Transverse colon (tissue), 4 donors: ENCODE measurements at regions of chr19 and their contacts with region 1.

Region 1: GRCh38 chr19:48746738-48747575 is at the start of gene IZUMO1:
- DNase-seq: peak; percentile 57
- H3K4me3 ChIP-seq: peak within 1 kb of the TSS in 2 of 4 donors; percentile 15 to 41
- H3K27ac ChIP-seq: peak within 1 kb of the TSS in 3 of 4 donors; percentile 42 to 70 (median 59)
- H3K4me1 ChIP-seq: peaks cover 0 to 7% (median under 1%) of the 10 kb centered on the region in 4 donors
- H3K27me3 ChIP-seq: peaks cover 47% of the 10 kb centered on the region
- CTCF ChIP-seq: no peak
- EP300 ChIP-seq: no peak
- POLR2A ChIP-seq: no peak
- total RNA-seq, gene IZUMO1: not detected

Region 2: GRCh38 chr19:48391107-48391986 is 355.6 kb before region 1 on chr19 and contains the start of gene KDELR1:
- in situ Hi-C with region 1: no loop called
- intact Hi-C with region 1: no loop called
- DNase-seq: peak; percentile 82
- H3K4me3 ChIP-seq: peak within 1 kb of the TSS; percentile 63 to 87 (median 78)
- H3K27ac ChIP-seq: peak within 1 kb of the TSS; percentile 88 to 94 (median 92)
- H3K4me1 ChIP-seq: peaks cover 0 to 36% (median 27%) of the 10 kb centered on the region in 4 donors
- H3K27me3 ChIP-seq: peaks cover 41% of the 10 kb centered on the region
- CTCF ChIP-seq: peak; percentile 84 to 94 (median 88)
- EP300 ChIP-seq: no peak
- POLR2A ChIP-seq: peak; percentile 65
- total RNA-seq, gene KDELR1: 80.6 to 146 (median 120) TPM

Region 3: GRCh38 chr19:48646001-48646721 is 100.8 kb before region 1 on chr19 and contains the start of gene CA11:
- in situ Hi-C with region 1: loop called in 1 of 4 experiments (anchors 10 kb)
- intact Hi-C with region 1: no loop called
- DNase-seq: peak; percentile 92
- H3K4me3 ChIP-seq: peak within 1 kb of the TSS; percentile 34 to 54 (median 45)
- H3K27ac ChIP-seq: peak within 1 kb of the TSS; percentile 81 to 90 (median 84)
- H3K4me1 ChIP-seq: peaks cover 8 to 27% (median 13%) of the 10 kb centered on the region in 4 donors
- H3K27me3 ChIP-seq: no peaks in the 10 kb centered on the region
- CTCF ChIP-seq: peak; percentile 87 to 94 (median 90)
- EP300 ChIP-seq: no peak
- POLR2A ChIP-seq: peak; percentile 32
- total RNA-seq, gene CA11: 1.4 to 2.5 TPM in 2 of 4 donors, not detected in the others

Region 4: DNA sequence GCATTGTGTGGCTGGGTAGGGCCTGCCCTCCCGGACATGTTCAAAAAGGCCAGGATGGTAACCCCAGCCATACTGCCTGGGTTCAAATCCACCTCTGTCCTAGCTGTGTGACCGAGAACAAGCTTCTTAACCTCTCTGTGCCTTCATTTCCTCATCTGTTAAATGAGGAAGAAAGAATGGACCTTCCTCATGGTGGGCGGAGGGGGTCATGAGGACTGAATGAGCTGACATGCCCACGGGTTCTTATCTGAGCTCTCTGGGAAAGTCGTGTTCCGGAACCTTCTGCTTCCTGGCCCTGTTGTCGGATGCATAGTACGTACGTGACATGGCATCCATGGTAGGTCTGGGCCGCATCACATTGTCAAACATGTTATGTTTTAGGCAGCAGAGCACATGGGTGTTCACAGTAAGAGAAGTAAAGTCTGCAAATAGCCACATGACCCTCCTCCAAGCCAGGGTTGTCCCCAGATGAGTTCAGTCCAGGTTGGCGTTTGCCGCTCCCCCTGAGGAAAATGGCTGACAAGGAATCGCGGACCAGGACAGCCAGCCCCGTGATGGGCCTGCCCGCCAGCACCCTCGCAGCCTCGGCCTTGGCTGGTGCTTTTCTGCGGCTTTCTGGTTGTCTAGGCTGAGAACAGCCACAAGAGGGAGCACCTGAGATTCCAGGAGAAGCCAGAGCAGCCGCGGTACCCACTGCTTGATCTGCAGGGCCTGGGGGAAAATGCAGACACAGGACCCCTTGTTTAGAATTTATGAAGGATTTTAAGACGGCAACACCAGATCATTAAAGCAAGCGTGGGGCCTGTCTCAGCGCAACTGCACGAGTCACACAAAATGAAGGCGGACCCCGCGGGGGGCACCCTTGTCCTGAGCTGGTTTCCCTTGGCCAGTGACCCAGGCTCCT is 71.8 kb before region 1 on chr19:
- in situ Hi-C with region 1: no loop called
- intact Hi-C with region 1: loop called (anchors 10 kb)
- DNase-seq: peak; percentile 86
- H3K4me3 ChIP-seq: no peak overlapping the region
- H3K27ac ChIP-seq: peak overlapping the region in 1 of 4 donors; percentile 6
- H3K4me1 ChIP-seq: peaks cover 5 to 26% (median 18%) of the 10 kb centered on the region in 4 donors
- H3K27me3 ChIP-seq: no peaks in the 10 kb centered on the region
- CTCF ChIP-seq: peak; percentile 87 to 90 (median 88)
- EP300 ChIP-seq: no peak
- POLR2A ChIP-seq: no peak